Endothelial cell of umbilical vein (primary cell): ENCODE measurements at regions of chr13 and their contacts with region 1.

Region 1: DNA sequence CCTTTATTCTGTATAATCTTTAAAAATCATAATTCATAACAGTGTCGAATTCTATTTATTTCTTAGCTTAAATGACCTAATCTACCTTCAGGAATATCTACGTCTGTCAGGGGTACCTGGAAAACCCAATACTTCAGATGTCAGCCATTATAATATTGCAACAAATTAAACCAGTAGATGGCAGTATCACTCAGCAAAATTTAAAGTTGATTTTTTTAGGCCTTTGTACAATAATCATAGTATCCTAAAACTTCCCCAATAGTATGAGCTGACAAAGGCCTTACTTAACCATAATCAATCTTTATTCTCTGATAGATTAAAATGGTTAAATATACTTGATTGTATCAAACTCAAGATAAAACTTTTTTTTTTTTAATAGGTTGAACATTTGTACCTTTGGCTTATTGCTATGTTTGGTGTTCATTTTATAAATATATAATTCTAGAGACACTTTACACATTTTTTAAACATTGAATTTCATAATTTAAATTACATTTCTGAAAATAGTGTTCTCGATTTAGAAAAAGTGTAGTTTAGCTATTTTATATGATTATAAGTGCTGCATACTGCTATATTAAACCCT is 830.2 kb upstream of the SPRY2 start:
- DNase-seq: peak; percentile 32
- H3K4me3 ChIP-seq: no peak overlapping the region
- H3K27ac ChIP-seq: no peak overlapping the region
- H3K4me1 ChIP-seq: no peaks in the 10 kb centered on the region
- H3K27me3 ChIP-seq: no peaks in the 10 kb centered on the region
- CTCF ChIP-seq: peak; percentile 15 to 17
- POLR2A ChIP-seq: no peak

Region 2: GRCh38 chr13:81395368-81395767 is 224.2 kb after region 1 on chr13:
- CTCF ChIA-PET with region 1: no interaction called
- POLR2A ChIA-PET with region 1: no interaction called
- dilution Hi-C with region 1: no loop called
- intact Hi-C with region 1: loop called (anchors 5 kb)
- DNase-seq: no peak
- H3K4me3 ChIP-seq: no peak overlapping the region
- H3K27ac ChIP-seq: no peak overlapping the region
- H3K4me1 ChIP-seq: no peaks in the 10 kb centered on the region
- H3K27me3 ChIP-seq: no peaks in the 10 kb centered on the region
- CTCF ChIP-seq: no peak
- POLR2A ChIP-seq: no peak

Region 3: DNA sequence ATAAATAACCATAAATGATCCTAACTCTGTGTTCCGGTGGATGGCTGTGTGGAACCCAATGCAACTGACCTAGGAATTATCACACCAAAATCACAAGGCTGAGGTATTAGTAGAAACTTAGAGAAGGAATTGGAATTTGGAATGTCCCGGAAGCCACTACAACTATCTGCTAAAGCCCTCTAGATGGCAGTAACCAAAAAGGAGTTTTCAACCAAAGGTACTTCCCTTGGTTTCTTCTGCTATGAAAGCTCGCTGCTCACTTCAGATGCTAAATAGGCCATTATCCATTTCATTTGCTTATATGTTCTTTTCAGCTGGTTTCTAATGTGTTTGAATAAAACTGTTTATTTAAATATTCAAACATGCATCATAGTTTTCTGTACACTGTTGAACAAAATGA is 758.8 kb after region 1 on chr13:
- CTCF ChIA-PET with region 1: no interaction called
- POLR2A ChIA-PET with region 1: no interaction called
- dilution Hi-C with region 1: no loop called
- intact Hi-C with region 1: loop called (anchors 5 kb)
- DNase-seq: peak; percentile 43
- H3K4me3 ChIP-seq: no peak overlapping the region
- H3K27ac ChIP-seq: no peak overlapping the region
- H3K4me1 ChIP-seq: no peaks in the 10 kb centered on the region
- H3K27me3 ChIP-seq: no peaks in the 10 kb centered on the region
- CTCF ChIP-seq: peak; percentile 37 to 49
- POLR2A ChIP-seq: no peak

Region 4: DNA sequence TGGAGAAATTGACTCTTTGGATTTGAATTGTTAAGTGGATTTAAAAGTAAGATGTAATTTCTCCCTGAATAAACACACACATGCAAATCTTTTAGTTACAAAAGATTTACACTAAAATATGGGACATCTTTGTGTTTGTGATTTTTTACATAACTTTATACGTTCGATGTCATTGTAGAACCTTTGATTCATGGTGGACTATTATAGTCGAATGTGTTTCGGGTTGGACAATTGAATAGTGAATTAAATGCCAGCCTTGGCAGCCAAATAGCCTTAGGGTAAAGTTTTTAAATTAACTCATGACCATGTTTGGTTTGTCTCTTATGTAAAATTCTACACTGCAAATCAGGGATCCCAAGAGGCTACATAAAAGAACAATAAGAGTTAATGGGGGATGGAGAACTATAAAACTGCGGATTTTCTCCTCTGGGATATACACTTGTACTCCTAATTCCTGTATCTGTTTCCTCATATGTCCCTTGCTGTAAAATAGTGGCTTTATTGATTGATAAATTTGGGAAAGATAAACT is 905.3 kb after region 1 on chr13:
- CTCF ChIA-PET with region 1: interaction called, 3 read pairs
- POLR2A ChIA-PET with region 1: no interaction called
- dilution Hi-C with region 1: no loop called
- intact Hi-C with region 1: loop called (anchors 5 kb)
- DNase-seq: no peak
- H3K4me3 ChIP-seq: no peak overlapping the region
- H3K27ac ChIP-seq: no peak overlapping the region
- H3K4me1 ChIP-seq: no peaks in the 10 kb centered on the region
- H3K27me3 ChIP-seq: no peaks in the 10 kb centered on the region
- CTCF ChIP-seq: no peak
- POLR2A ChIP-seq: no peak